ENCODE measurements at regions of chr10 and their contacts with region 1.

Region 1: DNA sequence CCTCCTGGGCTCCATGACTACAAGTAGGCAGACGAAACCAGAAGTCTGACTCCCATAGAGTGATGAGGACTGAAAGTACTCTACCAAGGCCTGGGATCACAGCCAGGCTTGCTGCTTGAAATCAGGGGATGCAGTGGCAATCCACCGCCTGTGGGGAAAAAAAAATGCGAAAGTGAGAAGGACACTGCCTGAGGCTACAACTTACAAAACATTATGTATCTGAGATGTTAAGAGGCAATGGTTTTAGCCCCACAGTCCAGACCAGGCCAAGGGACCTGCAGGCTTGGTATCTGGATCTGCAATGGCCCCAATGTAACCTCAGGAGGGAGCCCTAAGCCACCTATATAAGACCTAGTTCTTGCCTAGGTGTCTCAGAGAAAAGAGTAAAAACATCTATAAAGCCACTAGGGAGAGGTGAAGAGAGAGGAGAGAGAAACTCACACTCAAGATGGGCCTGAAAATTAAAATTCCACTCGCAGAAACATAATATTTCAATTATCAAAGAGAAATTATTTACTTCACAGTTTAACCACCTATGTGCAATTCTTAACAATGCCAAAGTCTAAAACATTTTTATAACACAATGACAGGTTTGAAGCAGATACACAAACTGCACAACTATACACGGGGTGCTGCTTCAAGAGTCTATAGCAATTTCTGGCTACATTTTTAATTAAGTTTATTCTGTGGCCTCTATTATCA is 13.9 kb downstream of the DNAJC1 start:
- DNase-seq: no peak
- ATAC-seq: peak; percentile 98
- H3K4me3 ChIP-seq: no peak overlapping the region
- H3K27ac ChIP-seq: no peak overlapping the region
- H3K4me1 ChIP-seq: no peaks in the 10 kb centered on the region
- H3K27me3 ChIP-seq: no peaks in the 10 kb centered on the region
- CTCF ChIP-seq: peak; percentile 65 to 68 (median 65)
- EP300 ChIP-seq: no peak
- POLR2A ChIP-seq: no peak
- RAD21 ChIP-seq: peak; percentile 77

Region 2: DNA sequence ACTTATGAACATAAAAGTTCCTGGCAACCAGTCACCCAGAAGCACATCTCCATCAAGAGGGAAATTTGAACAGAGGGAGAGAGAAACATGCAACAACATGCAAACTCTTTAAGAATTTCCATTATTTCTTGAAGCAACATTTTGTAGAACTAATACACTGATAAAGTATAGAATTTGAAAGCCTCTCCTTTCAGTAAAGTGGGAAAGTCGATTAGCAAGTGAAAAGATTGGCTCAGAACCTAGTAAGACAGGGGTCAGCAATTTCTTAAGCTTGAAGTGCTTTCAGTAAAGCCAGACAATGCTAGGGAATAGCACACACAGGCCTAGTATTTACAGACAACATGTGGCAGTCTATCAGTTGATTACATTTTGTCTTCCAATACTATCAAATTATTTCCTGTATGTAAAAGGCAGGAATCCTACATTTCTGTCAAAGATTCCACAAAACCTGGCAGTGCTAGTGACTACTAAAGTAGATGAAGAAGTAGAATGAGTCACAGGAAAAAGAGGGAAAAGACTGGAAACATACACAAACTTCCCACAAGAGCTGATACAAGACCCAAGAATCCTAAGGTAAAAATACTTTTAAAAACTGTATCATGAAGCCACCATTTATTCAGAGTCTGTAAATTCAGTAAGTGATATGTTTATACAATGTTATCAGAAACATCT is 11.3 kb before region 1 on chr10:
- CTCF ChIA-PET with region 1: interaction called, 5 read pairs
- POLR2A ChIA-PET with region 1: no interaction called
- RAD21 ChIA-PET with region 1: interaction called, 5 read pairs
- SMC1A ChIA-PET with region 1: interaction called, 30 read pairs
- in situ Hi-C with region 1: no loop called
- intact Hi-C with region 1: no loop called
- DNase-seq: no peak
- ATAC-seq: no peak
- H3K4me3 ChIP-seq: no peak overlapping the region
- H3K27ac ChIP-seq: no peak overlapping the region
- H3K4me1 ChIP-seq: no peaks in the 10 kb centered on the region
- H3K27me3 ChIP-seq: no peaks in the 10 kb centered on the region
- CTCF ChIP-seq: no peak
- EP300 ChIP-seq: no peak
- POLR2A ChIP-seq: no peak
- RAD21 ChIP-seq: no peak

Region 3: DNA sequence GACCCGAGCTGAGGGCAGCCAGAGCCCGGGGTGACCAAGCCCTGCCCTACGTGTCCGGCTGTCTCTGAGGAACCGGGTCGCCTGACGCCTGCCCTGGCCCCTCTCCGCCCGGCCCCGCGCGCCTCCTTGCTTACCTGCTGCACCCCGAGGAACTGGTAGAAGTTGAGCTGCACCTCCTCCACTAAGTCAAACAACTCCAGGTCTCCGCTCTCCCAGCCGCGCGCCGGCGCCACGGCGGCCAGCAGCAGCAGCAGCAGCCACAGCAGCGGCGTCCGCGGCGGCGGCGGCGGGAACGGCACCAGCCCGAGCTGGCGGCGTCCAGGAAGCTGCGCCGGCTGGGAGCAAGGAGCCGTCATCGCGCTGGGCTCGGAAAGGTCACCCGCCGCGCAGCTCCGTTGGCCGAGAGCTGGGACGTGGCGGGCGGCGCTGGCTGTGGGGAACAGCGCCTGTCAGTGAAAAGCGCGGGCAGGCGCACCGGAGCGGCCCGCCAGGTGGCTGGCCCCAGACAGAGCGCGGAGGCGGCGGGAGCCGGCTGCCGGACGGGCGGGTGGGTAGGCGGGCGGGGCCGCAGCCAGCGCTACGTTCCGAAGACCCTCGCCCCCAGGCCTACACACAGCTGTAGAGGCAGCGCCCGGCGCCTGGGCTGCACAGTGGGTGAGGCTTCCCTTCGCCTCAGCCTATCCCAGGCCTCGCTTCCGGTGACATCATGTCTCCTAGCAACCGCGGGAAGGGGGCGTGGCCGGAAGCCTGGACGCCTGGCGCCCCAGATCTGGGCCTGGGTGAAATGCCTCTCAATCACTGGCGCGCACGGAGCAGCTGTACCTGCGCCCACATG is 13.7 kb after region 1 on chr10 and contains the start of gene DNAJC1:
- CTCF ChIA-PET with region 1: interaction called, 29 read pairs
- POLR2A ChIA-PET with region 1: interaction called, 8 read pairs
- RAD21 ChIA-PET with region 1: interaction called, 22 read pairs
- SMC1A ChIA-PET with region 1: interaction called, 39 read pairs
- in situ Hi-C with region 1: no loop called
- intact Hi-C with region 1: no loop called
- DNase-seq: peak; percentile 83
- ATAC-seq: peak; percentile 94
- H3K4me3 ChIP-seq: peak within 1 kb of the TSS; percentile 78
- H3K27ac ChIP-seq: peak within 1 kb of the TSS; percentile 91
- H3K4me1 ChIP-seq: peaks cover 16% of the 10 kb centered on the region
- H3K27me3 ChIP-seq: no peaks in the 10 kb centered on the region
- CTCF ChIP-seq: 0 out of 6 replicates have a peak, but pooled peaks of 1 of the 3 experiments have one; percentile 1
- EP300 ChIP-seq: no peak
- POLR2A ChIP-seq: peak; percentile 89
- RAD21 ChIP-seq: no peak
- polyA plus RNA-seq, gene DNAJC1: 2.5 to 6.4 TPM

Region 4: DNA sequence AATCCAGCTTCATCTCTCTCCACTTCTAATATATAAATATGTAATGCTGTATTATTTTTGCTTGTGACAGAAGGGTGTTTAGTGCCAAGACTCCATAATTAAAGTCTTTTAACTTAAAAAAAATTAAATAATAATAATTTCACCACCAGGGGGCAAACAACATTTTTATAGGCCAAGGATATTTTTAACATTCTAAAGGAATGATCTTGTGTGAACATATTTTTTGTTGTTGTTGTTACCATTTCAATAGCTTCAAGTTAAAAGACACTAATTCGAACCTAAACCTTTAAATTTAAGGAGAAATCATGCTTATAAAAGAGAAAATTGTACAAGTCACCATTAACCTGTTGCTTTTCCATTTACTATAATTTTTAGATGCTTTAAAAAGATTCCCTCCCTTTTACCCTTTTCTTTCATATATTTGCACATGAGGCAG is 21.4 kb after region 1 on chr10:
- CTCF ChIA-PET with region 1: interaction called, 11 read pairs
- POLR2A ChIA-PET with region 1: interaction called, 3 read pairs
- RAD21 ChIA-PET with region 1: interaction called, 6 read pairs
- SMC1A ChIA-PET with region 1: interaction called, 39 read pairs
- in situ Hi-C with region 1: no loop called
- intact Hi-C with region 1: no loop called
- DNase-seq: no peak
- ATAC-seq: no peak
- H3K4me3 ChIP-seq: no peak overlapping the region
- H3K27ac ChIP-seq: no peak overlapping the region
- H3K4me1 ChIP-seq: no peaks in the 10 kb centered on the region
- H3K27me3 ChIP-seq: no peaks in the 10 kb centered on the region
- CTCF ChIP-seq: no peak; a peak in 1 of 6 replicates
- EP300 ChIP-seq: no peak
- POLR2A ChIP-seq: no peak
- RAD21 ChIP-seq: peak; percentile 4; the same call in 1 of the 2 replicates

Region 5: DNA sequence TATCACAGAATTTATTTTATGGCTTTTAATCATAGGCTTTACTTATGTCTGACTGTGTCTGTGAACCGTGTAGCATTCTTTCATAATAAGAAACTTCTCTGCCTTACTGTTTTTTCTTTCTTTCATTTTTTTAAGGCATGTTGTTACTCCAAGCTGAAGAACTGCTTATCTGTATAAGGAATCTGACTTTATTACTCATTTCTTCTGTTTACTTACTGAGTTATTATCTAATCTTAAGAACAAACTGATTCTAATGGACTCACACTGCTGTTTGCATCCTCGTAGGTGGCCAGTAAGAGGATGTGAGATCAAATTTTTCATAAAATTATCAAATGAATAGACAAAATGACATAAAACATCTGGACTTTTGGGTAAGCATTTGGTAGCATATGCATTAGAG is 68.6 kb after region 1 on chr10:
- CTCF ChIA-PET with region 1: no interaction called
- POLR2A ChIA-PET with region 1: no interaction called
- RAD21 ChIA-PET with region 1: no interaction called
- SMC1A ChIA-PET with region 1: no interaction called
- in situ Hi-C with region 1: no loop called
- intact Hi-C with region 1: no loop called
- DNase-seq: no peak
- ATAC-seq: no peak
- H3K4me3 ChIP-seq: no peak overlapping the region
- H3K27ac ChIP-seq: no peak overlapping the region
- H3K4me1 ChIP-seq: no peaks in the 10 kb centered on the region
- H3K27me3 ChIP-seq: no peaks in the 10 kb centered on the region
- CTCF ChIP-seq: no peak
- EP300 ChIP-seq: no peak
- POLR2A ChIP-seq: no peak
- RAD21 ChIP-seq: no peak

Region 6: DNA sequence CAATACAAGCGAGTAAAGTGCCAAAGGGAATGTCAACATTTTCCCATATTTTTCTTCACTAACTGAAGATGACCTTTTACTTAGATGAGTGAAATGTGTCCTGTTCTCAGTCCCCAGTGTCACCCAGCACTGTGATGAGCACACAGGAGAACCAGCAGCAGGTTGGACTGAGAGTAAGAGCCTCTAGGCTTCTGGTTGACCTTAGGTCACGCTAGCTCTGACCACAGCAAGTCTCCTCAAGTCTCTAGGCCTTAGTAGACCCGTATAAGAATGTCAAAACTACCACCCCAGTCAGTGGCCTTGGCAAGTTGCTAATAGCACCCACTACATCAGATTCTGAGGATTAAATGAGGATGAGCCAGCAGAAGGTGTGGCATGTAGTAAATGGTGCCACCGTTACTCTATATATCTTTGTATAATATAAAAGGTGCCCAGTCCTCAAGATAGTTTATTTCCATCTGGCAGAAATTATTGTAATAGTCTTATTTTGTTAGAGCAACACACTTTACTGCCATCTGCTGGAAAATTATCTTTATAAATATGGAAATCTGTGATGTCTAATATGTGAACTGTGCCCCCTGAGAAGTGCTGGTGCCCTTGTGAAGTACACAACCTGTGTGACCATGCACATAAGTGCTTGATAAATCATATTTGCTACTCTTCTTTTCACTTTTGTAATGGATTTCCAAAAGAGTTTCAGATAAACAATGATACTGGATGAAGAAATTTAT is 431.3 kb after region 1 on chr10:
- CTCF ChIA-PET with region 1: interaction called, 6 read pairs
- POLR2A ChIA-PET with region 1: no interaction called
- RAD21 ChIA-PET with region 1: interaction called, 3 read pairs
- SMC1A ChIA-PET with region 1: interaction called, 16 read pairs
- in situ Hi-C with region 1: no loop called
- intact Hi-C with region 1: loop called (anchors 5 kb)
- DNase-seq: no peak
- ATAC-seq: peak; percentile 78
- H3K4me3 ChIP-seq: no peak overlapping the region
- H3K27ac ChIP-seq: no peak overlapping the region
- H3K4me1 ChIP-seq: no peaks in the 10 kb centered on the region
- H3K27me3 ChIP-seq: no peaks in the 10 kb centered on the region
- CTCF ChIP-seq: peak in 2 of 3 experiments; percentile 16 to 27; a peak in 3 of 6 replicates
- EP300 ChIP-seq: no peak
- POLR2A ChIP-seq: no peak
- RAD21 ChIP-seq: peak; percentile 52

Region 7: GRCh38 chr10:22573820-22574569 is 584.4 kb after region 1 on chr10:
- CTCF ChIA-PET with region 1: interaction called, 3 read pairs
- POLR2A ChIA-PET with region 1: no interaction called
- RAD21 ChIA-PET with region 1: interaction called, 3 read pairs
- SMC1A ChIA-PET with region 1: interaction called, 9 read pairs
- in situ Hi-C with region 1: loop called (anchors 10 kb)
- intact Hi-C with region 1: loop called (anchors 10 kb)
- DNase-seq: no peak
- ATAC-seq: peak; percentile 76
- H3K4me3 ChIP-seq: no peak overlapping the region
- H3K27ac ChIP-seq: 0 out of 2 replicates have a peak overlapping the region, but pooled peaks have one; percentile 49
- H3K4me1 ChIP-seq: 0 out of 2 replicates have a peak, but pooled peaks cover 2% of the 10 kb centered on the region
- H3K27me3 ChIP-seq: no peaks in the 10 kb centered on the region
- CTCF ChIP-seq: peak; percentile 57 to 66 (median 63)
- EP300 ChIP-seq: no peak
- POLR2A ChIP-seq: no peak
- RAD21 ChIP-seq: peak; percentile 84